CD4-positive, alpha-beta memory T cell (primary cell): ENCODE measurements at regions of chr5 and their contacts with region 1.

Region 1: GRCh38 chr5:139293504-139294373 is at the start of gene MATR3:
- DNase-seq: peak; percentile 91 to 94 (median 93)
- H3K4me3 ChIP-seq: peak within 1 kb of the TSS; percentile 86 to 87
- H3K4me3 Mint-ChIP-seq: peak within 1 kb of the TSS; percentile 97 to 99 (median 98)
- H3K27ac ChIP-seq: peak within 1 kb of the TSS; percentile 100
- H3K27ac Mint-ChIP-seq: peak within 1 kb of the TSS; percentile 97 to 99 (median 99)
- H3K4me1 ChIP-seq: peaks cover 48% of the 10 kb centered on the region
- H3K4me1 Mint-ChIP-seq: peaks cover 30 to 54% (median 38%) of the 10 kb centered on the region in 4 donors
- H3K27me3 ChIP-seq: no peaks in the 10 kb centered on the region
- H3K27me3 Mint-ChIP-seq: no peaks in the 10 kb centered on the region
- total RNA-seq, gene MATR3: 228 to 255 TPM

Region 2: DNA sequence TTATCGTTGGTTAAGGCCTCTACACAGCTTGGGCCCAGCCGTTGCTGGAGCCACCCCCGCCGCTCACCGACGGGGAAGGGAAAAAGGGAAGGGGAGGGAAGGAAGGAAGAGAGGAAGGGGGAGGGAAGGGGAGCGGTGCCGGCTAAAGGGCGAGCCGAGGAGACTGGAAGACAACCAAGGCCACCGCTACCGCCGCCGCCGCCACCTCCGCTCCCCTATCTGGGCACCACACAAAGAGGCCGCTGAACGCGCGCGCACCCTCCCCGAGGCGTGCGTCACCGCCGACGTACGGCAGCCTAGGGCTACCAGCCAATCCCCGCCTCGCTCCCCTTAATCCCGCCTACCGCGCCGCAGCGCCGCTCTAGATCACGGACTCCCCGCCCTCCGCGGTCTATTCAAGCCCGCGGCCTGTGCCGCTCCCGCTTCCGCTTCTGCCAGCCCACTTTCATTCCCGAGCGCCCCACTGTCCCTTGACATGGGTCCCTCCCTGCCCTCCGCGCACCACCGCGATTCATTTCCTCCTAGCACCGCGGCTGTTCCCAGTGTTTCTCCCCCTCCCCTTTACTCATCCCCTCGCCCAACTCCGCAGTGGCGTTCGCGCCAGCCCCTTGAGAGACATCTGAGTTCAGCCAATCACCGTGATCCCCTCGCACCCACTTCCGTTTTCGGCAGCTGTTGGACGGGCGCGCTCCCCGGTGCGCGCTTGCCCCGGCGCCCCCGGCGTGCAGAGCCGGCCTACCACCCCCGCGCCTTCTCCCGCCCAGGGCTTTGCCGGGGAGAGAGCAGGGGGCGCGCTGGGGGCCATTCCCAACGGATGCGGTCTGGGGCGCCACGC is 1539.4 kb before region 1 on chr5 and contains the start of gene HNRNPA0:
- CTCF ChIA-PET with region 1: no interaction called
- POLR2A ChIA-PET with region 1: interaction called, 6 read pairs
- intact Hi-C with region 1: loop called (anchors 5 kb)
- DNase-seq: peak; percentile 98 to 99 (median 99)
- H3K4me3 ChIP-seq: peak within 1 kb of the TSS; percentile 49 to 96
- H3K4me3 Mint-ChIP-seq: peak within 1 kb of the TSS; percentile 98 to 100 (median 99)
- H3K27ac ChIP-seq: peak within 1 kb of the TSS; percentile 100
- H3K27ac Mint-ChIP-seq: peak within 1 kb of the TSS; percentile 100
- H3K4me1 ChIP-seq: peaks cover 33% of the 10 kb centered on the region
- H3K4me1 Mint-ChIP-seq: peaks cover 26 to 54% (median 34%) of the 10 kb centered on the region in 4 donors
- H3K27me3 ChIP-seq: no peaks in the 10 kb centered on the region
- H3K27me3 Mint-ChIP-seq: peaks cover 0 to 9% of the 10 kb centered on the region in 2 donors
- total RNA-seq, gene HNRNPA0: 30.5 to 30.7 TPM

Region 3: GRCh38 chr5:139197710-139198669 is 95.7 kb before region 1 on chr5 and contains the start of gene SIL1:
- CTCF ChIA-PET with region 1: no interaction called
- POLR2A ChIA-PET with region 1: interaction called, 10 read pairs
- intact Hi-C with region 1: no loop called
- DNase-seq: peak; percentile 90 to 93 (median 91)
- H3K4me3 ChIP-seq: peak within 1 kb of the TSS; percentile 59 to 69
- H3K4me3 Mint-ChIP-seq: peak within 1 kb of the TSS; percentile 87 to 95 (median 89)
- H3K27ac ChIP-seq: peak within 1 kb of the TSS; percentile 86
- H3K27ac Mint-ChIP-seq: peak within 1 kb of the TSS; percentile 84 to 98 (median 94)
- H3K4me1 ChIP-seq: peaks cover 13% of the 10 kb centered on the region
- H3K4me1 Mint-ChIP-seq: peaks cover 13 to 29% (median 19%) of the 10 kb centered on the region in 4 donors
- H3K27me3 ChIP-seq: no peaks in the 10 kb centered on the region
- H3K27me3 Mint-ChIP-seq: no peaks in the 10 kb centered on the region
- total RNA-seq, gene SIL1: 16.4 to 16.7 TPM

Region 4: DNA sequence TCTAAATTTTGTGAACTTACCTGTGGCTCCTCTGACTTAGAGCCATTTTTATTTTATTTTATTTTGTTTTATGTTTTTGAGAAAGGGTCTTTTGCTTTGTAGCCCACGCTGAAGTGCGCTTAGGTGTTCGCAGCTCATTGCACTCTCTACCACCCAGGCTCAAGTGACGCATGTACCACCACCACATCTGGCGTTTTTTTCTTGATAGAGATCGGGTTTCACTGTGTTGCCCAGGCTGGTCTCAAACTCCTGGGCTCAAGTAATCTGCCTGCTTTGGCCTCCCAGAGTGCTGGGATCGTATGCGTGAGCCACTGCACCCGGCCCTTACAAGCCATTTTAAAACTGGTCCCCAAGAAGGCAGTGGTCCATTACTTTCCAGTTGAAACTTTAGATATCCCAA is 18.3 kb after region 1 on chr5:
- CTCF ChIA-PET with region 1: interaction called, 3 read pairs
- POLR2A ChIA-PET with region 1: interaction called, 114 read pairs
- intact Hi-C with region 1: loop called (anchors 2 kb)
- DNase-seq: no peak
- H3K4me3 ChIP-seq: no peak overlapping the region
- H3K4me3 Mint-ChIP-seq: peak overlapping the region in 3 of 8 donors; percentile 34 to 60 (median 39)
- H3K27ac ChIP-seq: no peak overlapping the region
- H3K27ac Mint-ChIP-seq: peak overlapping the region in 2 of 7 donors; percentile 17 to 64
- H3K4me1 ChIP-seq: peaks cover 81% of the 10 kb centered on the region
- H3K4me1 Mint-ChIP-seq: peaks cover 46 to 72% (median 56%) of the 10 kb centered on the region in 4 donors
- H3K27me3 ChIP-seq: no peaks in the 10 kb centered on the region
- H3K27me3 Mint-ChIP-seq: no peaks in the 10 kb centered on the region

Region 5: DNA sequence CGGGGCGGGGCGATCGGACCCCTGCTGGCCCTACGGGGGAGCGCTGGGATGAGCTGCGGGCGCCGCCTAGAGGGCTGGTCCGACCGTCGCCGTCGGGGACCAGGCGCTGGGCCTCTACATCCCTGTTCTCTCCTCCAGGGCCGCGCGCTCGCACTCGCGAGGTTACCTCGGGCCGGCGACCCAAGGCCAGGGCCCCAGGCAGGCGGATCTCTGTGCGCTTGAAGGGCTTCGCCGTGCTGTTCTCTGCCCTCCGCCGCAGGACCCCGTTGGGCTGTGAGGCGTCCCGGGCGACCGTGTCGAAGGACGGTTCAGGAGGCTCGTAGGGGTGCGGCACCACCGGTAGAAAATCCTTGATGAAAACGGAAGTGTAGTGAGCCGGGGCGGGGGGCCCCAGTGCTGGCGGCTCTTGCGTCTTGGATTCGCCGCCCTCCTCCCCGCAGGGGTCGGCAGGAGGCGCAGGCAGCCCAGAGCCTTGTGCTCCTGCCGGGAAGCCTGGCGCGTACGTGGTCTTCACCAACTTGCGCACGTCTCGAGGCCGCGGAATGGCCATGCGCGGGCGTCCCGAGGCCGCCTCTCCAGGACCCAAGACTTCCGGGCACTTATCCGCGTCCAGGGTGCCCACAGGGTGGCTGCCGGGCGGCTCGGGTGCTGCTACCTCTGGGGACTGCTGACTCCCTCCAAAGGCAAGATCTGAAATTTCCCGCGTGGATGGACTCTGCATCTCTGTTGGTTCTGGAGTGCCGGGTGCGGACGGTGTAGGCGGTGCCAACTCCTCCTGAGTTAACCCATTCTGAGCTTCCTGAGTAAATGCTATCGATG is 99.1 kb after region 1 on chr5:
- CTCF ChIA-PET with region 1: interaction called, 3 read pairs
- POLR2A ChIA-PET with region 1: interaction called, 12 read pairs
- intact Hi-C with region 1: loop called (anchors 2 kb)
- DNase-seq: peak; percentile 69 to 81 (median 73)
- H3K4me3 ChIP-seq: peak overlapping the region; percentile 61 to 69
- H3K4me3 Mint-ChIP-seq: peak overlapping the region; percentile 88 to 94 (median 88)
- H3K27ac ChIP-seq: peak overlapping the region; percentile 39
- H3K27ac Mint-ChIP-seq: peak overlapping the region; percentile 57 to 93 (median 85)
- H3K4me1 ChIP-seq: peaks cover 42% of the 10 kb centered on the region
- H3K4me1 Mint-ChIP-seq: peaks cover 22 to 43% (median 30%) of the 10 kb centered on the region in 4 donors
- H3K27me3 ChIP-seq: no peaks in the 10 kb centered on the region
- H3K27me3 Mint-ChIP-seq: no peaks in the 10 kb centered on the region

Region 6: GRCh38 chr5:139560752-139561654 is 267.3 kb after region 1 on chr5 and contains the start of gene UBE2D2:
- CTCF ChIA-PET with region 1: no interaction called
- POLR2A ChIA-PET with region 1: interaction called, 23 read pairs
- intact Hi-C with region 1: loop called (anchors 1 kb)
- DNase-seq: peak; percentile 96 to 99 (median 97)
- H3K4me3 ChIP-seq: peak within 1 kb of the TSS; percentile 60 to 90
- H3K4me3 Mint-ChIP-seq: peak within 1 kb of the TSS; percentile 94 to 99 (median 98)
- H3K27ac ChIP-seq: peak within 1 kb of the TSS; percentile 93
- H3K27ac Mint-ChIP-seq: peak within 1 kb of the TSS; percentile 93 to 99 (median 96)
- H3K4me1 ChIP-seq: peaks cover 42% of the 10 kb centered on the region
- H3K4me1 Mint-ChIP-seq: peaks cover 25 to 48% (median 37%) of the 10 kb centered on the region in 4 donors
- H3K27me3 ChIP-seq: no peaks in the 10 kb centered on the region
- H3K27me3 Mint-ChIP-seq: no peaks in the 10 kb centered on the region
- total RNA-seq, gene UBE2D2: 160 to 169 TPM